A673 (cell line): ENCODE measurements at regions of chr7 and their contacts with region 1.

Region 1: GRCh38 chr7:131574741-131575140 is 18.3 kb upstream of the PODXL start:
- DNase-seq: no peak
- H3K4me3 ChIP-seq: no peak overlapping the region
- H3K27ac ChIP-seq: no peak overlapping the region
- H3K4me1 ChIP-seq: no peaks in the 10 kb centered on the region
- H3K27me3 ChIP-seq: no peaks in the 10 kb centered on the region
- CTCF ChIP-seq: no peak

Region 2: GRCh38 chr7:130350945-130351793 is 1223.6 kb before region 1 on chr7:
- CTCF ChIA-PET with region 1: no interaction called
- POLR2A ChIA-PET with region 1: no interaction called
- intact Hi-C with region 1: no loop called
- DNase-seq: no peak
- H3K4me3 ChIP-seq: no peak overlapping the region
- H3K27ac ChIP-seq: no peak overlapping the region
- H3K4me1 ChIP-seq: peaks cover 10% of the 10 kb centered on the region
- H3K27me3 ChIP-seq: no peaks in the 10 kb centered on the region
- CTCF ChIP-seq: no peak

Region 3: GRCh38 chr7:131124001-131124629 is 450.6 kb before region 1 on chr7:
- CTCF ChIA-PET with region 1: no interaction called
- POLR2A ChIA-PET with region 1: no interaction called
- intact Hi-C with region 1: no loop called
- DNase-seq: no peak
- H3K4me3 ChIP-seq: no peak overlapping the region
- H3K27ac ChIP-seq: no peak overlapping the region
- H3K4me1 ChIP-seq: no peaks in the 10 kb centered on the region
- H3K27me3 ChIP-seq: no peaks in the 10 kb centered on the region
- CTCF ChIP-seq: no peak

Region 4: GRCh38 chr7:131603932-131604331 is 29.2 kb after region 1 on chr7:
- CTCF ChIA-PET with region 1: no interaction called
- POLR2A ChIA-PET with region 1: interaction called, 10 read pairs
- intact Hi-C with region 1: no loop called
- DNase-seq: no peak
- H3K4me3 ChIP-seq: no peak overlapping the region
- H3K27ac ChIP-seq: no peak overlapping the region
- H3K4me1 ChIP-seq: peaks cover 6% of the 10 kb centered on the region
- H3K27me3 ChIP-seq: no peaks in the 10 kb centered on the region
- CTCF ChIP-seq: no peak

Region 5: DNA sequence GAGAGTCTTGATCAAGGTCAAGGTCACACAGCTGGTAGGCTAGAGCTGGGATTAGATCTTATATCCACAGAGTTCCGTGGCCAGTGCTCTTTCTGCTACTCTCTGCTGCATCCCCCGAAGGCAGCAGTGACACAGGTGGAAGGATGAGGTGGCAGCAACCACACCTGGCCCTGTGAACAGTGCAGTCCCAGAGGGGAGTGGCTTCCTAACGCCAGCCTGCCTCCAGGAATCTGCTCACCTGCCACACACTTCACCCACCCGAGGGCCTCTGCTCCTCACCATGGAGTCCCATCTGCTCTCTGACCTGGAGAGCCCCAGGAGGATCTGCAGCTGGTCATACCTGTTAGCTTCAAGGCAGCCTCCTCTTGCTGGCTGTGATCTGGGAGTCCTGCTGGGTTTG is 517.4 kb after region 1 on chr7:
- CTCF ChIA-PET with region 1: no interaction called
- POLR2A ChIA-PET with region 1: no interaction called
- intact Hi-C with region 1: no loop called
- DNase-seq: no peak
- H3K4me3 ChIP-seq: no peak overlapping the region
- H3K27ac ChIP-seq: no peak overlapping the region
- H3K4me1 ChIP-seq: no peaks in the 10 kb centered on the region
- H3K27me3 ChIP-seq: peaks cover 10% of the 10 kb centered on the region
- CTCF ChIP-seq: no peak

Region 6: GRCh38 chr7:133234961-133235875 is 1660.5 kb after region 1 on chr7:
- CTCF ChIA-PET with region 1: no interaction called
- POLR2A ChIA-PET with region 1: no interaction called
- intact Hi-C with region 1: no loop called
- DNase-seq: no peak
- H3K4me3 ChIP-seq: no peak overlapping the region
- H3K27ac ChIP-seq: no peak overlapping the region
- H3K4me1 ChIP-seq: no peaks in the 10 kb centered on the region
- H3K27me3 ChIP-seq: peaks cover 14% of the 10 kb centered on the region
- CTCF ChIP-seq: no peak